PC-9 (cell line): ENCODE measurements at regions of chr7 and their contacts with region 1.

Region 1: GRCh38 chr7:2080477-2080876 is 152.3 kb downstream of the MAD1L1 start:
- DNase-seq: no peak
- H3K4me3 ChIP-seq: no peak overlapping the region
- H3K27ac ChIP-seq: no peak overlapping the region
- H3K4me1 ChIP-seq: no peaks in the 10 kb centered on the region
- H3K27me3 ChIP-seq: no peaks in the 10 kb centered on the region
- CTCF ChIP-seq: no peak

Region 2: DNA sequence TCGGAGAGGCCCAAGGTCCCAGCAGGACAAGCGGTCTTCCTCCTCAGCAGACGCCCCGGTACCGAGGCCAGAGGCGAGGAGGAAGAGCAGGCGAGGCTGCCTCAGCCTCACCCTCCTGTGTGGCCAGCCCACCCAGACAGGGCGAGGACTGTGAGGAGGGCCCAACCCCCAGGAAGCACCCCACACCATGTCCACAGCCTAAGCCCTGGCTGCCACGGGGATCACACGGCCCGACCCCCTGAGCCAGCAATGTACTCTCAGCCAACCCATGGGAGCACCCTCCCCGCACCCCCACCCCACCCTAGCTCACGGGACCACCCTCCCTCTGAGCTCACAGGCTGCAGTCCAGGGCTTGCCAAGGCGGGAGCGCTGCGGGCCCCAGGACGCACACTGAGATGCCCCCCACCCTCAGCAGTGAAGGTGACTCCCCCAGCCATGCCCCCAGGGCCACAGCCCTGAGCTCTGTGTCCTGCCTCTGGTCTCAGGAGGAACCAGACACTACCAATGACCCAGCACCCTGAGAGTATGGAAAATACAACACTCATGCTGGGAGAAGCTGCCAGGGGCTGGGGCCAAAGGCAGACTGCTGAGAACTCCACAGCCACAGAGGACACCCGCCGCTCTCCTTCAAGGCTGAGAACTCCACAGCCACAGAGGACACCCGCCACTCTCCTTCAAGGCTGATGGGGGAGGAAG is 58.7 kb after region 1 on chr7:
- CTCF ChIA-PET with region 1: no interaction called
- POLR2A ChIA-PET with region 1: interaction called, 31 read pairs
- intact Hi-C with region 1: no loop called
- DNase-seq: no peak
- H3K4me3 ChIP-seq: no peak overlapping the region
- H3K27ac ChIP-seq: no peak overlapping the region
- H3K4me1 ChIP-seq: no peaks in the 10 kb centered on the region
- H3K27me3 ChIP-seq: no peaks in the 10 kb centered on the region
- CTCF ChIP-seq: no peak

Region 3: GRCh38 chr7:2482725-2483451 is 402.4 kb after region 1 on chr7:
- CTCF ChIA-PET with region 1: no interaction called
- POLR2A ChIA-PET with region 1: no interaction called
- intact Hi-C with region 1: no loop called
- DNase-seq: peak in 1 of 2 experiments; percentile 32
- H3K4me3 ChIP-seq: no peak overlapping the region
- H3K27ac ChIP-seq: no peak overlapping the region
- H3K4me1 ChIP-seq: peaks cover 6% of the 10 kb centered on the region; the same call in 1 of the 2 replicates
- H3K27me3 ChIP-seq: no peaks in the 10 kb centered on the region; the same call in 1 of the 2 replicates
- CTCF ChIP-seq: peak; percentile 37; the same call in 1 of the 2 replicates

Region 4: DNA sequence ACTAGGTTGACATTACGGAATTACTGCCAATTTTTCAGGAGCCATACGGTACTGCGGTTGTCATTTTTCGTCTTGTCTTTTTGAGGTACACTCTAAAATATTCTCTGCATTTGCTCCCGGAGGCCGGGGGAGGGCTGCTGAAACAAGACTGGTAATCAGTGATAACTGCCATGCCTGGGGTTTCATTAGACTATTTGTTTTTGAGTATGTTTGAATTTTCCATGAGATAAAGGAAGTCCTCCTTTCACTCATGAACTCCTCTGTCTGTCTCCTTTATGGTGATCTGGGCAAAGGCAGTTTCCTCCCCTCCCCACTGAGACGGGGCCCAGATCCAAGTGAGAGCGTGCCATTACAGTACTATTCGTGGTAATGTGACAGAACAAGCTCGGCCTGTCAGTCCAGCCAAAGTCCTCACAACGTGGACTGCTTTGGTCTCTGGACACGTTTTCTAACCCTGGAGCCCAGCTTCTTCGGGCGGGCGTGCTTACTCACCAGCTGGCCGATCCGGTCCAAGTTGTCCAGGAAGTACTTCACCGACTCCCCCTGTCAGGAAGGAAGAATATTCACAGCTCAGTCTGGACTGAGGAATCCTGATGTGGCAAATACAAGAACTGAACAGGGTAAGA is 652.6 kb after region 1 on chr7:
- CTCF ChIA-PET with region 1: no interaction called
- POLR2A ChIA-PET with region 1: no interaction called
- intact Hi-C with region 1: no loop called
- DNase-seq: peak; percentile 83 to 93
- H3K4me3 ChIP-seq: no peak overlapping the region
- H3K27ac ChIP-seq: peak overlapping the region; percentile 38
- H3K4me1 ChIP-seq: peaks cover 19% of the 10 kb centered on the region
- H3K27me3 ChIP-seq: no peaks in the 10 kb centered on the region
- CTCF ChIP-seq: no peak